IMR-90 (cell line): ENCODE measurements at regions of chr18 and their contacts with region 1.

Region 1: GRCh38 chr18:10072671-10073175 is 158.9 kb downstream of the VAPA start:
- DNase-seq: peak; percentile 65
- ATAC-seq: peak; percentile 21; the same call in 1 of the 2 replicates
- H3K4me3 ChIP-seq: no peak overlapping the region
- H3K27ac ChIP-seq: no peak overlapping the region
- H3K4me1 ChIP-seq: peaks cover 16% of the 10 kb centered on the region; the same call in 1 of the 2 replicates
- H3K27me3 ChIP-seq: no peaks in the 10 kb centered on the region; the same call in none of the 2 replicates
- CTCF ChIP-seq: no peak
- POLR2A ChIP-seq: no peak
- RAD21 ChIP-seq: no peak

Region 2: DNA sequence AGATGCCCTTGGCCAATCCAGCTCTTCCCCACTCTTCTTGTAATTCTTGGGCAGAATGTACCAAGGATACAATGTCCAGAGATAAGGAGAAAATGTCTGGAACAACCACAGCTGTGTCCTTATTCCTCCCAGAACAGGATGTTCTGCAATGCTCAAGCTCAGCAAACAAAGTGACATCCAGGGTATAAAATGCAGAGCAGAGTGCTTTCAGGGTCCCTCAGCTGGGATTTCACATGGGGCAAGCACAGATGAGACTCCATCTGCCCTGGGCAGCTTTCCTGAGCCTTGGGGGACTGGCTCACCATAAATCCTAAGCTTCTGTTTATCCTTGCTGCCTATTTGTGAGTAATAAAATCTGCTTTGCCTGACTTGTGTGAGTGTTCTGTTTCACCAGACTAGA is 31.5 kb before region 1 on chr18:
- CTCF ChIA-PET with region 1: no interaction called
- POLR2A ChIA-PET with region 1: no interaction called
- dilution Hi-C with region 1: no loop called
- in situ Hi-C with region 1: no loop called
- intact Hi-C with region 1: loop called (anchors 1 kb)
- DNase-seq: peak; percentile 57
- ATAC-seq: peak; percentile 65
- H3K4me3 ChIP-seq: no peak overlapping the region
- H3K27ac ChIP-seq: peak overlapping the region; percentile 55; the same call in 1 of the 2 replicates
- H3K4me1 ChIP-seq: no peaks in the 10 kb centered on the region; the same call in 1 of the 2 replicates
- H3K27me3 ChIP-seq: no peaks in the 10 kb centered on the region
- CTCF ChIP-seq: no peak
- POLR2A ChIP-seq: no peak
- RAD21 ChIP-seq: no peak

Region 3: GRCh38 chr18:10230072-10230471 is 157.3 kb after region 1 on chr18:
- CTCF ChIA-PET with region 1: no interaction called
- POLR2A ChIA-PET with region 1: no interaction called
- dilution Hi-C with region 1: no loop called
- in situ Hi-C with region 1: no loop called
- intact Hi-C with region 1: loop called (anchors 10 kb)
- DNase-seq: peak; percentile 83
- ATAC-seq: peak; percentile 47; the same call in 1 of the 2 replicates
- H3K4me3 ChIP-seq: no peak overlapping the region
- H3K27ac ChIP-seq: no peak overlapping the region
- H3K4me1 ChIP-seq: peaks cover 4% of the 10 kb centered on the region
- H3K27me3 ChIP-seq: no peaks in the 10 kb centered on the region
- CTCF ChIP-seq: peak; percentile 34
- POLR2A ChIP-seq: no peak
- RAD21 ChIP-seq: peak; percentile 34; the same call in 1 of the 2 replicates

Region 4: GRCh38 chr18:10378688-10379363 is 306.1 kb after region 1 on chr18:
- CTCF ChIA-PET with region 1: no interaction called
- POLR2A ChIA-PET with region 1: no interaction called
- dilution Hi-C with region 1: no loop called
- in situ Hi-C with region 1: no loop called
- intact Hi-C with region 1: loop called (anchors 10 kb)
- DNase-seq: peak; percentile 78
- ATAC-seq: peak; percentile 53
- H3K4me3 ChIP-seq: no peak overlapping the region
- H3K27ac ChIP-seq: peak overlapping the region; percentile 61
- H3K4me1 ChIP-seq: peaks cover 24% of the 10 kb centered on the region
- H3K27me3 ChIP-seq: no peaks in the 10 kb centered on the region
- CTCF ChIP-seq: no peak
- POLR2A ChIP-seq: no peak
- RAD21 ChIP-seq: no peak